ENCODE measurements at regions of chr12 and their contacts with region 1.

Region 1: DNA sequence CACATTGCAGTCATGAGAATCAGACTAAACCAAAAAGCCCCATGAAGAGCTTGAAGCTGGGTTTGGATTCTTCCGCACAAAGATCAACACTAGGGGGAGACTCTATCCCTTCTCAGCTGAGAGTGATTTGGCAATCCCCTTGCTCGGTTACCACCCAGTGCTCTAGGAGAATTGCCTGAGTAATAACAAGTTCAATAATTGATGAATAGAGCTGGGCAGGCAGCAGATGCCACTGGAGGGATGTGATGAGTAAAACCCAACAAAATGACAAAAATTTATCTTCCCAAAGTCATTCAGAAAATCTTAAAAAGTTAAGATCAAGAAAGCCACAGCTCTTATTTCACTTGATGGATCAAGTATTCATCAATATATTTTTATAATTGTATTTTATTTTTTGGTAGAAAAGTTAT is 185.6 kb upstream of the ARID2 start:
- DNase-seq: no peak
- ATAC-seq: peak; percentile 89
- H3K4me3 Mint-ChIP-seq: no peak overlapping the region
- H3K27ac Mint-ChIP-seq: no peak overlapping the region
- H3K4me1 Mint-ChIP-seq: peaks cover 4% of the 10 kb centered on the region
- H3K27me3 Mint-ChIP-seq: no peaks in the 10 kb centered on the region
- CTCF ChIP-seq: no peak

Region 2: GRCh38 chr12:45170456-45171042 is 373.4 kb before region 1 on chr12:
- CTCF ChIA-PET with region 1: interaction called, 4 read pairs
- POLR2A ChIA-PET with region 1: no interaction called
- intact Hi-C with region 1: loop called (anchors 5 kb)
- DNase-seq: peak; percentile 49
- ATAC-seq: no peak
- H3K4me3 Mint-ChIP-seq: no peak overlapping the region
- H3K27ac Mint-ChIP-seq: no peak overlapping the region
- H3K4me1 Mint-ChIP-seq: no peaks in the 10 kb centered on the region
- H3K27me3 Mint-ChIP-seq: no peaks in the 10 kb centered on the region
- CTCF ChIP-seq: peak; percentile 73

Region 3: DNA sequence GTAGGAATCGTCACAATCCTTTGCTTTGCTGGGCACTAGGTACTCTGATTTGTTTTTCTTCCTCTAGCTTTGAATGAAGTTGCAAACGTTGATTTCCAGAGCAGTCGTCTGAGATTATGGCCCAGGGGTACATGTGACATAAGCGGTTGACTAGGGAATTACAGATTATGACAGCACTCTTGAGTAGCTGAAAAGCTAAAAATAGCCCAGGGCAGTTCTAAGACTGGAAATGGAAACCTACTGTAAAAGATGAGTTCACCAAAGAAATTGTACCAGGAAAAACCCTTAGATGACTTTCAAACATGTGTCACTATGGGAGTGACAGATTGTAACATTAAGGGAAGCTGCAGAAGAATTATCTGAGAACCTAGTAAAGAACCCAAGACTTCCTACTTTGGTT is 219.5 kb before region 1 on chr12:
- CTCF ChIA-PET with region 1: no interaction called
- POLR2A ChIA-PET with region 1: no interaction called
- intact Hi-C with region 1: no loop called
- DNase-seq: no peak
- ATAC-seq: no peak
- H3K4me3 Mint-ChIP-seq: no peak overlapping the region
- H3K27ac Mint-ChIP-seq: no peak overlapping the region
- H3K4me1 Mint-ChIP-seq: no peaks in the 10 kb centered on the region
- H3K27me3 Mint-ChIP-seq: no peaks in the 10 kb centered on the region
- CTCF ChIP-seq: no peak

Region 4: GRCh38 chr12:45433441-45433868 is 110.5 kb before region 1 on chr12:
- CTCF ChIA-PET with region 1: no interaction called
- POLR2A ChIA-PET with region 1: no interaction called
- intact Hi-C with region 1: no loop called
- DNase-seq: no peak
- ATAC-seq: no peak
- H3K4me3 Mint-ChIP-seq: no peak overlapping the region
- H3K27ac Mint-ChIP-seq: no peak overlapping the region
- H3K4me1 Mint-ChIP-seq: no peaks in the 10 kb centered on the region
- H3K27me3 Mint-ChIP-seq: no peaks in the 10 kb centered on the region
- CTCF ChIP-seq: no peak

Region 5: DNA sequence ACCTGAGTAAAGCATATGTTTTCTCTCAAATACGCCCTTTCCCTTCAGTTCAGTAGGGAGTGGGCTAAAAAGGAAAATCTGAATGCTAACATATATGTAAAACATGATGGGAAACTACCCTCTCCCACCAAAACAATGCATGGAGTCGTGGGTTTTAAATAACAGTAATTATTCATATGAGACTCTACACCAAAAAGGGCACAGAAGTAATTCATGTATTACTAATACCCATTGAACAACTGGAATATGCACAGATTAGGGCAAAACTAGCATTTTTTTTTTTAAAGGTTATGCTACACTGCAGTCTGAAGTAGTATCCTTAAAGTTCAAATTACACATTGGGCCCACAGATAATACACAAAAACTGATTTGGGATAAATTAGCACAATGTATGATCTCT is 177.5 kb after region 1 on chr12:
- CTCF ChIA-PET with region 1: interaction called, 77 read pairs
- POLR2A ChIA-PET with region 1: interaction called, 45 read pairs
- intact Hi-C with region 1: loop called (anchors 1 kb)
- DNase-seq: no peak
- ATAC-seq: no peak
- H3K4me3 Mint-ChIP-seq: no peak overlapping the region
- H3K27ac Mint-ChIP-seq: no peak overlapping the region
- H3K4me1 Mint-ChIP-seq: peaks cover 62% of the 10 kb centered on the region
- H3K27me3 Mint-ChIP-seq: no peaks in the 10 kb centered on the region
- CTCF ChIP-seq: no peak

Region 6: DNA sequence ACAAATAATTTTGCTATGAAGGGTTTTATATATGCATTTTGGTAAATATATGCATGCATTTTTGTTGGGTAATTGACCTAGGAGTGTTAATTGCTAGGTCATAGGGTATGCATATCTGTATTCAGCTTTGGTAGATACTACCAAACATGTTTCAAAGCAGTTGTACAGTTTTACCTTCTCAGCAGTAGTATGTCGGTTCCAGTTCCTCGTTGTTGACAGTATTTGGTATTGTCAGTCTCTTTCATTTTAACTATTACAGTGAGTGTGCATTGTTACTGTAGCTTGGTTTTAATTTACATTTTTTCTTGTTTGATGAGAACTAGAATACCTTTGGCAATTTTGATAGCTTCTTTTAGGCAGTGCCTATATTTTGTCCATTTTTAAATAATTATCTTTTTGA is 284.5 kb after region 1 on chr12:
- CTCF ChIA-PET with region 1: interaction called, 3 read pairs
- POLR2A ChIA-PET with region 1: no interaction called
- intact Hi-C with region 1: loop called (anchors 10 kb)
- DNase-seq: no peak
- ATAC-seq: no peak
- H3K4me3 Mint-ChIP-seq: no peak overlapping the region
- H3K27ac Mint-ChIP-seq: no peak overlapping the region
- H3K4me1 Mint-ChIP-seq: peaks cover 10% of the 10 kb centered on the region
- H3K27me3 Mint-ChIP-seq: no peaks in the 10 kb centered on the region
- CTCF ChIP-seq: no peak

Region 7: DNA sequence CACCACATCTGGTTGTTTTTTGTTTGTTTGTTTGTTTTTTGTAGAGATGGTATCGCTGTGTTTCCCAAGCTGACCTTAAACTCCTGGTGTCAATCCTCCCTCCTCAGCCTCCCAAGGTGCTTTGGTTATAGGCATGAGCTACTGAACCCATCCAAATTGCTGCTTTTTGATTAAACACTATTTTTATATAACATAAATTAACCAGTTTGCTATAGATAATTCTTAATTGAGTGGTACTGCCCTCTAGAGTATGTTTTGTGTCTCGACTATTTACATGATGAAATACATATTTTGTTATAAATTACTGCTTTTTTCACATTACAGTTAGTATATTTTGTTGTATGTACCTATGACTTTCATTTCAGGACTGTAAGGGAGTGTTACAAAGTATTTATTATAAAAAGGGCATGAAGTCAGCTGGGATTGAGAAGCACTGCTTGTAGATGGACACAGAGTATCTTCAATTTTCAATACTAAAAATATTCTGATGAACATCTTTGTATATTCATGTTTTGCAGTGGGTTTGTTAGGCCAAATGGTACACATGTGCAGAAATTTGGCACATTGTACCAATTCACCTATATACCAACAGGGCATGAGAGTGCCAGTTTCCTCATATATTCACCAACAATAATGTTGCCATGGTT is 461.4 kb after region 1 on chr12:
- CTCF ChIA-PET with region 1: no interaction called
- POLR2A ChIA-PET with region 1: no interaction called
- intact Hi-C with region 1: loop called (anchors 1 kb)
- DNase-seq: no peak
- ATAC-seq: no peak
- H3K4me3 Mint-ChIP-seq: no peak overlapping the region
- H3K27ac Mint-ChIP-seq: no peak overlapping the region
- H3K4me1 Mint-ChIP-seq: no peaks in the 10 kb centered on the region
- H3K27me3 Mint-ChIP-seq: no peaks in the 10 kb centered on the region
- CTCF ChIP-seq: no peak

Measured in activated B cell treated with CpG ODN at 0.5 μM for 24 hours (primary cell).